ENCODE measurements at regions of chr21 and their contacts with region 1.

Region 1: DNA sequence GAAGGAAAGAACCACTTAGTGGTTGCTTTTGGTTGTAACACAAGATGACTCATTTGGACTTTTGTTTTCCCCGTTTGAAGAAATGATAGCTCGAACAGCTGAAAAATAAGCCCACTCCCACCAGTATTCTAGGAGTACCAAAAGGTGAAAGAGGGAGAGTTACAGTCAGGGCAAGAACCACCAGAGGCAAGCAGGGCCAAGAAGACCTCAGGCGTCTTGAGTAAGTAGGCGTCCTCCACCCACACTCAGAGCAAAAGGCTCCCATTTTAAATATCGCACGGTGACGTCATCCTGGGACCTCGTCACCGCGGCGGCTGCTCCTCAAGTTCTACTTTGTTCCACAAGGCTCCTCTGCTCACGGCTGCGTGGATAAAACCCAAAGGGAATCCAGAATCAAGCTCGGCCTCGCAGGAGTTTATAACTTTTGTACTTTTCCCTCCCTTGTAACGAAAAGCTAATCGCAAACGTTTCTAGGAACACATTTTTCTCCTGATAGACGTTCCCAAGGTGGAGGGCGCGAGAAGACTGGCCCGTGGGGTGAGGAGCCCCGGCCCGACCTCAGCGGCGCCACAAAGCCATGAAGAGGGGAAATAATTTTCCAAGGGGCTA is 1.2 kb downstream of the BTG3 start:
- DNase-seq: peak; percentile 89
- H3K4me3 Mint-ChIP-seq: peak overlapping the region; percentile 95
- H3K27ac Mint-ChIP-seq: peak overlapping the region; percentile 95
- H3K4me1 Mint-ChIP-seq: peaks cover 30% of the 10 kb centered on the region
- H3K27me3 Mint-ChIP-seq: no peaks in the 10 kb centered on the region

Region 2: DNA sequence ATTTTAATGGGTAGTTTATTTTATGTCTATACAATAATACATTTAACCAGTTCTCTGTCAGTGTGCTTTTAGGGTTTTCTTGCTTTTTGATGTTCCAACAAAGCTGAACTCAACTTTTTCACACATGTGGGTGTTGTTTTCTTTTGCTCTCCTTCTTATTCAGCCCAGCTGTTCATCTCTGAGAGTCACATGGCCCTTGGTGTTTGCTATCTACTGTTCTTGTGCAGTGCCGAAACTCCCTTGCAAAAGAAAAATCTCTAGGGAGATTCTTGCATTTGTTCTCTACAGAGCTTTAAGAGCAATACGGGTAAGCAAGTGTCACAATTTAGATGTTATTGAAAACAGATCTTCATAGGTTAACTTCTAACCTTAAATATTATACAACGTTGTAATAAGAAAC is 379.7 kb before region 1 on chr21:
- CTCF ChIA-PET with region 1: no interaction called
- POLR2A ChIA-PET with region 1: no interaction called
- intact Hi-C with region 1: no loop called
- DNase-seq: no peak
- H3K4me3 Mint-ChIP-seq: no peak overlapping the region
- H3K27ac Mint-ChIP-seq: no peak overlapping the region
- H3K4me1 Mint-ChIP-seq: no peaks in the 10 kb centered on the region
- H3K27me3 Mint-ChIP-seq: no peaks in the 10 kb centered on the region

Region 3: DNA sequence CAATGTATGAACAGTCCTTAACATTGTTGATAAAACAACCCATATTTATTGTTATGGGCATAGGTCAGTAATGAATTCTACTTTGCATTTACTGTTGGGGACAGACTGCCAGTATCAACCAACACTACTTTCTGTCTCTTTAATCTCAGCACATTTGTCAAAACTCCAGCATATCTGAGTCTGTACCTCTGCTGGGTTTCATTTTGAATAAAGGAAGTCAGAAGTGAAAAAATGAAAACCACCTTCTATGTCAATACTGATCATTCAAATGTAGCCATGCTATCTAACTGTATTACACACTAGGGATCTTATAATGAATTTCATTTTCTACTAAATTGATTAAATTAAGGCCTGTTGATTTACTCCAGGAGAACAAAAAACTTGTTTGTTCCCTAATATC is 122.9 kb before region 1 on chr21:
- CTCF ChIA-PET with region 1: no interaction called
- POLR2A ChIA-PET with region 1: no interaction called
- intact Hi-C with region 1: loop called (anchors 5 kb)
- DNase-seq: no peak
- H3K4me3 Mint-ChIP-seq: no peak overlapping the region
- H3K27ac Mint-ChIP-seq: no peak overlapping the region
- H3K4me1 Mint-ChIP-seq: peaks cover 11% of the 10 kb centered on the region
- H3K27me3 Mint-ChIP-seq: peaks cover 2% of the 10 kb centered on the region

Region 4: GRCh38 chr21:17597680-17598079 is 13.8 kb before region 1 on chr21:
- CTCF ChIA-PET with region 1: interaction called, 4 read pairs
- POLR2A ChIA-PET with region 1: no interaction called
- intact Hi-C with region 1: loop called (anchors 2 kb)
- DNase-seq: no peak
- H3K4me3 Mint-ChIP-seq: no peak overlapping the region
- H3K27ac Mint-ChIP-seq: no peak overlapping the region
- H3K4me1 Mint-ChIP-seq: peaks cover 6% of the 10 kb centered on the region
- H3K27me3 Mint-ChIP-seq: no peaks in the 10 kb centered on the region

Region 5: DNA sequence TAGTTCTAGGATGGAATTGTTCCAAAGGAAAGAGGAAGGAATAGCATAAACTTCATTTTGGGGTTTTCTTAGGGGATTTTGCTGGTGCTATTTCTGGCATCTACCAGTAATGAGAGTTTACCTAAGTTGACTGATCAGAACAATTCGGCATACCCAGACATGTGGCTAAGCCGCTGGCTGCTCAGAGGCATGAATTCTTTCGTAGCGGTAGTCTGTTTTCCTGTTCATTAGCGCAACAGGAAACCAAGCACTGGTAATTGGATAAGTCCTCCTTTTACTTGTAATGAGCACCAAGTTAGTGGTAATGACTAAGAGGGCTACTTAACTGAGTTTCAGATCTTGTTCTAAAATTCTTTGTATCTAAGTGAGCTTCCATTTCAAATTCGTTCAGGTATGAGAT is 169.0 kb after region 1 on chr21:
- CTCF ChIA-PET with region 1: no interaction called
- POLR2A ChIA-PET with region 1: no interaction called
- intact Hi-C with region 1: loop called (anchors 1 kb)
- DNase-seq: peak; percentile 66
- H3K4me3 Mint-ChIP-seq: peak overlapping the region; percentile 21
- H3K27ac Mint-ChIP-seq: peak overlapping the region; percentile 70
- H3K4me1 Mint-ChIP-seq: peaks cover 84% of the 10 kb centered on the region
- H3K27me3 Mint-ChIP-seq: no peaks in the 10 kb centered on the region

Measured in activated CD4-positive, alpha-beta memory T cell treated with anti-CD3 and anti-CD28 coated beads for 36 hours (primary cell).